Esophagus squamous epithelium (tissue), 5 donors: ENCODE measurements at regions of chr7 and their contacts with region 1.

Region 1: DNA sequence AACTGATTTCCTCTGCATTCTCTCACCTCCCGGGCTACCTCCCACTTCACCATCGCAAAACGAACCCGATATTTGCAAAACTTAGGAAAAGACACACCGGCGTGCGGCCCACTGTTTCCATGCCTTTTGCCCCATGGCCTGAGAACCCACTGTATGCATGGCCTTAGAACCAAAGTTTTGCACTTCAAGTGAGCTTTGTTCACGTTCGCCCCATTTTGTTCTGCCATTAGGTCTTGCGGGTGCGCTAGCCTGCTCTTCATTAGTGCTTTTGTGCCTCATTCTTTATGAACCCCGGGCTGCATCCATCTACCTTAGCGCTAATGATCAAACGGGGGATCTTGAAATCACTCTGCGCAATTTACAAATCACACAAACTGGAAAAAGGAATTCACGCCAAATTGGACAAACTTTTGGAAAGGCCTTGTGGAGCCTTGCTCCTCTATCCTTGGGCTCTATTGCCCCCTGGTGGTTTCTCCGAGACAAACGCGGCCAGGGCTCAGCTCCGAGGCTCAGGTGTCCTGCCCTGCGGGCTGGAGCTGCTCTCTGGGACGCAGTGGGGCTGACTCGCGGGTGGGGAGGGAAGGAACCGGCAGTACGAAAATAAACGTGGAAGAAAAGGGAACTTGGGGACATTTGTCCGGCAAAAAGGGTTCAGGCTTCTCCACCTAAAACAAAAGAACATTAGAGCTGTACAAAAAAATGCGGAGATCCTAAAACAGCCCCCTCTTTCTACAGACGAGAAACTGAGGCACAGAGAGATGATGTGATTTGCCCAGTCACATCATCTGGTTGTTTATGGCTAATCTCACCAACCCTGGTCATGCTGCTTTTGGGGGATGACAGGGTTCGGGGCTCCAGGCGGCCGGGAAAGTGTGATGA is 300.4 kb upstream of the NFE2L3 start:
- DNase-seq: no peak
- H3K4me3 ChIP-seq: peak overlapping the region in 2 of 4 donors; percentile 35 to 56
- H3K27ac ChIP-seq: peak overlapping the region; percentile 77 to 89 (median 86)
- H3K4me1 ChIP-seq: peaks cover 10 to 88% (median 36%) of the 10 kb centered on the region in 3 donors
- H3K27me3 ChIP-seq: peaks cover 5 to 74% (median 34%) of the 10 kb centered on the region in 4 donors
- CTCF ChIP-seq: peak; percentile 78 to 92 (median 85)
- POLR2A ChIP-seq: no peak

Region 2: GRCh38 chr7:25259587-25260243 is 591.9 kb before region 1 on chr7:
- intact Hi-C with region 1: loop called (anchors 10 kb)
- DNase-seq: peak; percentile 7
- H3K4me3 ChIP-seq: no peak overlapping the region
- H3K27ac ChIP-seq: no peak overlapping the region
- H3K4me1 ChIP-seq: peaks cover 0 to 10% (median 0%) of the 10 kb centered on the region in 3 donors
- H3K27me3 ChIP-seq: no peaks in the 10 kb centered on the region
- CTCF ChIP-seq: peak; percentile 74 to 78 (median 78)
- POLR2A ChIP-seq: no peak

Region 3: DNA sequence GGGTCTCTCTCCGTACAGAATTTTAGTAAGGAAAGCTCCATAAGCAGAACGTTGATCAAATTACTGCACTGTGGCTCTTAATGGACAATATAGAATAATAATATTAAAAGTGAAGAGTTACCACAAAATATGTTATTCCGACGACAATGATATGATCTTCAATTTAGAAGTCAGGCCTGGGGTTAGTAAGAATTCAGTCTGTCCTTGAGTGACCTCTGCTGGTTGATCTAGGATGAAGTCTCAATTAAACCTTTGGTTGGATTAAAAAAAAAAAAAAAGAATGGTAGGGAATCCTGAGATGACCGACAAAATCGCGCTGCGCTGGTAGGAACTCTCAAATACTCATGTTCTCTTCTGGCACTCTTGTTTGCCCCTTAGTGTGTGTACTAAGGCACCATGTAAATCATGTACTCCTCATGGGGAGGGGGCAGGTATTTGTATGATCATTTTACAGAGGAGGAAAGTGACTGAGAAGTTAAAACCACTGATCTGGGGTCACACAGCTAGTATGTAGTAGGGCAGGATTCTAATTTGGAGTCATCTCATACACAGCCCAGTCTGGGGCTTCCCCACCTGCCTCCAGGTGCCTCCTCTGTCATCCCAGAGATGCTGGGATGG is 462.0 kb before region 1 on chr7:
- intact Hi-C with region 1: loop called (anchors 5 kb)
- DNase-seq: no peak
- H3K4me3 ChIP-seq: no peak overlapping the region
- H3K27ac ChIP-seq: no peak overlapping the region
- H3K4me1 ChIP-seq: peaks cover 12 to 42% (median 14%) of the 10 kb centered on the region in 3 donors
- H3K27me3 ChIP-seq: peaks cover 0 to 7% (median 0%) of the 10 kb centered on the region in 4 donors
- CTCF ChIP-seq: peak in 5 of 6 experiments; percentile 48 to 60 (median 52)
- POLR2A ChIP-seq: no peak

Region 4: GRCh38 chr7:25565949-25566348 is 285.6 kb before region 1 on chr7:
- intact Hi-C with region 1: loop called (anchors 5 kb)
- DNase-seq: no peak
- H3K4me3 ChIP-seq: no peak overlapping the region
- H3K27ac ChIP-seq: peak overlapping the region in 2 of 4 donors; percentile 53 to 63
- H3K4me1 ChIP-seq: peaks cover 0 to 20% (median 3%) of the 10 kb centered on the region in 3 donors
- H3K27me3 ChIP-seq: no peaks in the 10 kb centered on the region
- CTCF ChIP-seq: peak; percentile 98 to 100 (median 98)
- POLR2A ChIP-seq: no peak

Region 5: GRCh38 chr7:26187380-26188205 is 336.0 kb after region 1 on chr7:
- intact Hi-C with region 1: no loop called
- DNase-seq: no peak
- H3K4me3 ChIP-seq: no peak overlapping the region
- H3K27ac ChIP-seq: no peak overlapping the region
- H3K4me1 ChIP-seq: peaks cover 0 to 20% (median 2%) of the 10 kb centered on the region in 3 donors
- H3K27me3 ChIP-seq: no peaks in the 10 kb centered on the region
- CTCF ChIP-seq: no peak
- POLR2A ChIP-seq: no peak

Region 6: GRCh38 chr7:27160546-27161213 is 1309.1 kb after region 1 on chr7:
- intact Hi-C with region 1: loop called (anchors 10 kb)
- DNase-seq: peak; percentile 62
- H3K4me3 ChIP-seq: peak overlapping the region; percentile 43 to 71 (median 56)
- H3K27ac ChIP-seq: peak overlapping the region in 2 of 4 donors; percentile 44 to 47
- H3K4me1 ChIP-seq: peaks cover 30 to 71% (median 42%) of the 10 kb centered on the region in 3 donors
- H3K27me3 ChIP-seq: peaks cover 23 to 99% (median 65%) of the 10 kb centered on the region in 4 donors
- CTCF ChIP-seq: peak; percentile 99 to 100 (median 99)
- POLR2A ChIP-seq: no peak